ENCODE measurements at regions of chr17 and their contacts with region 1.

Region 1: GRCh38 chr17:36611345-36612072 is 10.1 kb downstream of the MRM1 start:
- DNase-seq: no peak
- ATAC-seq: no peak
- H3K4me3 ChIP-seq: no peak overlapping the region
- H3K4me3 Mint-ChIP-seq: no peak overlapping the region
- H3K27ac ChIP-seq: no peak overlapping the region
- H3K27ac Mint-ChIP-seq: no peak overlapping the region
- H3K4me1 ChIP-seq: no peaks in the 10 kb centered on the region
- H3K4me1 Mint-ChIP-seq: peaks cover 0 to 9% (median 6%) of the 10 kb centered on the region in 7 donors
- H3K27me3 ChIP-seq: no peaks in the 10 kb centered on the region
- H3K27me3 Mint-ChIP-seq: no peaks in the 10 kb centered on the region

Region 2: DNA sequence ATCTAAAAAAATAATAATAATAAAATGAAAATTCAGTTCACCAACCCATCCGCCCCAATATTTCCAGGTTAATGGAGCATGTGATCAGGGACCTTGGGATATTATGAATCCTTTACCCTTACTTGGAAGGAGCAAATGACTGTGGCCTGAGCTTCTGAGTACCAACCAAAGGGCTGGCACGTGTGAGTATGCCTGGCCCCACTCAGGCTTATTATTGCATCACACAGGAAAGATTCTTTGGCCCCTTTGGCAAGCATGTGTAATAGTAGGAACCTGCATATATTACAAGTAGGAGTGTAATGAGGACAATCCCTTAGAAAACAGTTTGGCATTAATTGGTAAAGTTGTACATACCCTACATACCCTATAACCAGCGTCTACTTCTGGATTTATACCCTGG is 757.1 kb after region 1 on chr17:
- CTCF ChIA-PET with region 1: interaction called, 3 read pairs
- POLR2A ChIA-PET with region 1: no interaction called
- intact Hi-C with region 1: loop called in 1 of 2 experiments (anchors 5 kb)
- DNase-seq: no peak
- ATAC-seq: no peak
- H3K4me3 ChIP-seq: no peak overlapping the region
- H3K4me3 Mint-ChIP-seq: no peak overlapping the region
- H3K27ac ChIP-seq: no peak overlapping the region
- H3K27ac Mint-ChIP-seq: no peak overlapping the region
- H3K4me1 ChIP-seq: no peaks in the 10 kb centered on the region
- H3K4me1 Mint-ChIP-seq: peaks cover 0 to 6% (median 3%) of the 10 kb centered on the region in 7 donors
- H3K27me3 ChIP-seq: no peaks in the 10 kb centered on the region
- H3K27me3 Mint-ChIP-seq: no peaks in the 10 kb centered on the region